Gastrocnemius medialis (tissue), 4 donors: ENCODE measurements at regions of chr19 and their contacts with region 1.

Region 1: GRCh38 chr19:10835754-10836477 is at the start of gene TMED1:
- DNase-seq: peak; percentile 97 to 100
- ATAC-seq: peak; percentile 85 to 89
- H3K4me3 ChIP-seq: peak within 1 kb of the TSS; percentile 73 to 87 (median 80)
- H3K27ac ChIP-seq: peak within 1 kb of the TSS; percentile 95 to 100 (median 98)
- H3K4me1 ChIP-seq: peaks cover 6 to 10% of the 10 kb centered on the region in 2 donors
- H3K27me3 ChIP-seq: no peaks in the 10 kb centered on the region
- CTCF ChIP-seq: peak in 4 of 5 experiments; percentile 23 to 77 (median 54)
- POLR2A ChIP-seq: peak; percentile 50 to 57
- total RNA-seq, gene TMED1: 33.0 to 90.0 (median 57.1) TPM

Region 2: DNA sequence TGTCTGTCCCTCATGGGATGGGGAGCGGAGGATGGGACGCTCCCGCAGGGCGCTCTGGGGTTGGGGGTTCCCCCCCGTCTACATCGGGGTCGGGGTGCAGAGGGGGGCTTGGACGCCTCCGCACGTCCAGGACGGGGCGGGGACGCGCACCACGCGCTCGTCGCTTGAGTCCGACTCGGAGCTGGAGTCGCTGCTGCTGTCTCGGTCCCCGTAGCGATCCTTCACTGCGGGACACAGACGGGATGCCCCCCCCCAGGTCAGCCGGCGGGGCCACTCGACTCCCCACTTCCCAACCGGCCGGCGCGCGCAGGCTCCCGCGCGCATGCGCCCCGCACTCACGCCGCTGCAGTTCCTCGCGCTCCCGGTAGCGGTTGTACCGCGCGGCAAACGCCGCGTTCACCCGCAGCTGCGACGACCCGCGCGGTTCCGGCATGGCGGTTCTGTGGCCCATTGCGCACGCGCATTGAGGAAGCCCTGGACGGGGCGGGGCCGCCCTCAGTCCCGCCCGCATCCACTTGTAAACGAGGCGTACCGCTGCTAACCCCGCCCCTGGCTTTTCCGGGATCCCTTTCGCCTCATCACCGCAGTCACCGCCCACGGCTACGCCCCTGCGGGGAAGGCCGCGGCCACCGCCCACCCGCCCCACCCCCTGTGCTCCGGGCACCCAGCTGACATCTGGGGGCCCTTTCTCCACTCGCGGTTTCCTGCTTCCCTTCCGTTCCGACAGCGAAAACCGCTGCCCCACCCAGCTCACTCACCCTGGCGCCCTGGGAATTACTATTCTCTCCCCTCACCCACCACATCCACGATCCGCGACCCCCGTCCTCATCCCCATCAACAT is 270.1 kb before region 1 on chr19 and contains the start of gene KRI1:
- in situ Hi-C with region 1: no loop called
- intact Hi-C with region 1: loop called (anchors 10 kb)
- DNase-seq: peak; percentile 97
- ATAC-seq: peak; percentile 77 to 80
- H3K4me3 ChIP-seq: peak within 1 kb of the TSS; percentile 68 to 94 (median 86)
- H3K27ac ChIP-seq: peak within 1 kb of the TSS; percentile 84 to 92 (median 92)
- H3K4me1 ChIP-seq: peaks cover 34 to 35% of the 10 kb centered on the region in 2 donors
- H3K27me3 ChIP-seq: no peaks in the 10 kb centered on the region
- CTCF ChIP-seq: peak; percentile 34 to 75 (median 55)
- POLR2A ChIP-seq: peak; percentile 80 to 94
- total RNA-seq, gene KRI1: 16.8 to 24.1 (median 19.9) TPM

Region 3: GRCh38 chr19:10695401-10696398 is 140.2 kb before region 1 on chr19:
- in situ Hi-C with region 1: no loop called
- intact Hi-C with region 1: loop called (anchors 5 kb)
- DNase-seq: peak; percentile 75 to 88
- ATAC-seq: peak; percentile 91 to 92
- H3K4me3 ChIP-seq: peak overlapping the region in 3 of 4 donors; percentile 20 to 38 (median 33)
- H3K27ac ChIP-seq: no peak overlapping the region
- H3K4me1 ChIP-seq: peaks cover 10 to 12% of the 10 kb centered on the region in 2 donors
- H3K27me3 ChIP-seq: no peaks in the 10 kb centered on the region
- CTCF ChIP-seq: no peak
- POLR2A ChIP-seq: no peak

Region 4: GRCh38 chr19:10717356-10718204 is 118.3 kb before region 1 on chr19 and contains the start of gene DNM2:
- in situ Hi-C with region 1: no loop called
- intact Hi-C with region 1: loop called (anchors 1 kb)
- DNase-seq: peak; percentile 100
- ATAC-seq: peak; percentile 94 to 97
- H3K4me3 ChIP-seq: peak within 1 kb of the TSS; percentile 71 to 98 (median 82)
- H3K27ac ChIP-seq: peak within 1 kb of the TSS; percentile 82 to 99 (median 94)
- H3K4me1 ChIP-seq: peaks cover 25 to 27% of the 10 kb centered on the region in 2 donors
- H3K27me3 ChIP-seq: no peaks in the 10 kb centered on the region
- CTCF ChIP-seq: peak; percentile 77 to 90 (median 83)
- POLR2A ChIP-seq: peak; percentile 82 to 89
- total RNA-seq, gene DNM2: 76.2 to 131 (median 108) TPM

Region 5: GRCh38 chr19:10960314-10961072 is 124.6 kb after region 1 on chr19 and contains the start of gene SMARCA4:
- in situ Hi-C with region 1: no loop called
- intact Hi-C with region 1: loop called (anchors 1 kb)
- DNase-seq: peak; percentile 93 to 97
- ATAC-seq: peak; percentile 91 to 93
- H3K4me3 ChIP-seq: peak within 1 kb of the TSS; percentile 72 to 91 (median 86)
- H3K27ac ChIP-seq: peak within 1 kb of the TSS; percentile 88 to 99 (median 95)
- H3K4me1 ChIP-seq: peaks cover 23 to 24% of the 10 kb centered on the region in 2 donors
- H3K27me3 ChIP-seq: no peaks in the 10 kb centered on the region
- CTCF ChIP-seq: no peak
- POLR2A ChIP-seq: peak; percentile 96 to 97
- total RNA-seq, gene SMARCA4: 24.0 to 72.6 (median 68.7) TPM